ENCODE measurements at regions of chr10 and their contacts with region 1.

Region 1: GRCh38 chr10:96642973-96643372 is 56.2 kb upstream of the TM9SF3 start:
- DNase-seq: peak; percentile 85
- H3K4me3 Mint-ChIP-seq: no peak overlapping the region
- H3K27ac Mint-ChIP-seq: no peak overlapping the region
- H3K4me1 Mint-ChIP-seq: peaks cover 21% of the 10 kb centered on the region
- H3K27me3 Mint-ChIP-seq: peaks cover 6% of the 10 kb centered on the region

Region 2: DNA sequence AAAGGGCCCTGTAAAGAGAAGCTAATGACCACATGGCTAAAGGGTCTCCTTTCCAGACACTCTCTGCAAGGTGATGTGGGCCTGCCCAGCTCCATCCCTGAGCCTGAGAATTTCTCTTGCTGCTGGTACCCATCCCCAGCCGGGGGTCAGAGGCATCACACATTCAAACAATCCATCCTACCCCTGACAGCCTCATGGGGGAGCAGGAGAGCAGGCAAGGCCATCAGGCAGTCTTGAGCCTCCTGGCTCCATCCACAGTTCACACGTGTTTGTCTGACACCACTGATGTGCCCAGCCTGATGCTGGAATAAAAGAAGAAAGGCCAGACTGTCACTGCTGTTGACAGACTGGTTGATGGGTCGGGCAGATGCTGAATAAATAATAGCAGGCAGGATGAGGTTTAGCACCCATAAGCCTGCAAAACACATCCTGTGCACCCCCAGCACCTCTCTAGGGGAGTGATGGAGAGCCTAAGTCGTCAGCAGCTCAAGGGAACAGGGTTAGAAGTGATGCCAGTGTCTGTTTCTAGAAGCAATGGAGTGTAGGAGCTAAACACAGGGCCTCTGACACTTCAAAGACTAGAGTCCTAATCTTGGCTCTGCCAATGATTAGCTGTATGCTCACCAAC is 172.7 kb before region 1 on chr10:
- intact Hi-C with region 1: no loop called
- DNase-seq: peak; percentile 72
- H3K4me3 Mint-ChIP-seq: no peak overlapping the region
- H3K27ac Mint-ChIP-seq: no peak overlapping the region
- H3K4me1 Mint-ChIP-seq: no peaks in the 10 kb centered on the region
- H3K27me3 Mint-ChIP-seq: peaks cover 24% of the 10 kb centered on the region

Region 3: GRCh38 chr10:96690755-96691731 is 48.1 kb after region 1 on chr10:
- intact Hi-C with region 1: loop called (anchors 10 kb)
- DNase-seq: no peak
- H3K4me3 Mint-ChIP-seq: no peak overlapping the region
- H3K27ac Mint-ChIP-seq: no peak overlapping the region
- H3K4me1 Mint-ChIP-seq: peaks cover 31% of the 10 kb centered on the region
- H3K27me3 Mint-ChIP-seq: no peaks in the 10 kb centered on the region

Region 4: GRCh38 chr10:96719850-96720421 is 77.0 kb after region 1 on chr10:
- intact Hi-C with region 1: loop called (anchors 2 kb)
- DNase-seq: peak; percentile 78
- H3K4me3 Mint-ChIP-seq: peak overlapping the region; percentile 99
- H3K27ac Mint-ChIP-seq: peak overlapping the region; percentile 92
- H3K4me1 Mint-ChIP-seq: peaks cover 22% of the 10 kb centered on the region
- H3K27me3 Mint-ChIP-seq: peaks cover 21% of the 10 kb centered on the region

Measured in activated CD4-positive, alpha-beta T cell treated with anti-CD3 and anti-CD28 coated beads, Interleukin-2, amount 10 ng/mL, durations not matched to agents 24 days and 14 days (primary cell).